ENCODE measurements at regions of chr6 and their contacts with region 1.

Region 1: DNA sequence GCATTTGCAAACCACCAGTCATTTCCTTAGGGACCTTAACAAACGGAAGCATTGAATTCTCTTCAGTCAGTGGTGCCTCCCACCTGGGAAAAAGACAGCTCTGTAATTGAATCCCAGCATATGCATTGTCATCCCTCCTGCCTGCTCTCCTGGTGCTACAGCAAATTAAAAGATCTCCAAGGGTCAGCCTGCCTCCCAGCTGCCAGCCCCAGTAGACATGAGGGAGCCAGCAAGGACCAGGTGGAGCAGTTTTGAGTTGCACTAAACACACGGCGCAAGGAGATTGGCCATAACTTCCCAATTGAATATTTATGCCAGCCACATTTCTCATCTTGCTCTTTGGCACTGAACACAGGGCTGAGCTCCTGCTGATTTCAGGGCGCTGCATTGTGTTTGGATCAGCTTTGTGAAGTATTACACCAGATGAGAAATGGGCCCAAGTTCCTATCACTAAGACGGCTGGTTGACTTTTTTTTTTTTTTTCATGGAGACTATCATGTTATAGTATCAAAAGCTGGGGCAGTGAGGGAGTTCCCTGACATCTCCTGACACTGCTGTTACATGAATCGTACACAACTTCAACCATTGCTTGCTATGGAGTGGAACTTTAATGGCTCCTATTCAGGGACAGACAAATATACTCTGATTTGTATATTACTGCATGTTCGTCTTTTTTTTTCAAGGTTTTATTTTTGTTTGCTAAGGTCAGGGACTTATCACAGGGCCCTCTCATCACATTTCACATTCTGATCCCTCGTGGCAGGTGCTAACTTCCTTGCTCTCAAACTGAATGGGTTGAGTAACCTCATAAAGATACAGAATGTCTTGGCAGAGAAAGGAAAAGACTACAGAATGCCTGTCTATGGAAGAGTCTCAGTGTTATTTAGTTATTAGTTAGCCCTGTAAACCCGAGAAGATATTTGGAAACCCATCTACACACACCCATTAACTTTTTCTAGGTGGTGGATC is 191.1 kb downstream of the EYA4 start:
- DNase-seq: peak; percentile 66
- H3K4me3 ChIP-seq: no peak overlapping the region
- H3K27ac ChIP-seq: peak overlapping the region; percentile 31
- H3K4me1 ChIP-seq: peaks cover 17% of the 10 kb centered on the region
- H3K27me3 ChIP-seq: no peaks in the 10 kb centered on the region
- CTCF ChIP-seq: no peak

Region 2: GRCh38 chr6:133406226-133406625 is 26.1 kb before region 1 on chr6:
- CTCF ChIA-PET with region 1: interaction called, 13 read pairs
- POLR2A ChIA-PET with region 1: no interaction called
- intact Hi-C with region 1: no loop called
- DNase-seq: no peak
- H3K4me3 ChIP-seq: no peak overlapping the region
- H3K27ac ChIP-seq: no peak overlapping the region
- H3K4me1 ChIP-seq: peaks cover 36% of the 10 kb centered on the region
- H3K27me3 ChIP-seq: no peaks in the 10 kb centered on the region
- CTCF ChIP-seq: no peak

Region 3: DNA sequence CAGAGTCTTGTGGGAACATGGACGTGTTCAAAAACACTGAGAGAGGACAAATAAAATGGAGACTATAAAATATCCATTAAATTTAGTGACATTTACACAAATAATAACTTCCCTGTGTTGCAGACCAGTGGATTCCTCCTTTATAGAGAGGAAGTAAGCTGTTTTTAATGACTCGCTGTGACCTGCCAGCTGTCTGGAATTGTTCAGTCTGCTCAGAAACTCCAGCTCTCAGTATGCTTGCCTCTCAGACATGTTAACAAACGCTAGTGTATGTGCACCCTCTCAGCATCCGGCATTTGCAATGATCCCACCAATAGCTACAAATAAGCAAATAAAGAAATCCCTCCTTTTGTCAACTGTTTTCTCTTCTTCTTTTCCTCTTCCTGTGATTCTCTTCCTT is 298.6 kb after region 1 on chr6:
- CTCF ChIA-PET with region 1: no interaction called
- POLR2A ChIA-PET with region 1: no interaction called
- intact Hi-C with region 1: no loop called
- DNase-seq: no peak
- H3K4me3 ChIP-seq: no peak overlapping the region
- H3K27ac ChIP-seq: no peak overlapping the region
- H3K4me1 ChIP-seq: no peaks in the 10 kb centered on the region
- H3K27me3 ChIP-seq: peaks cover 53% of the 10 kb centered on the region
- CTCF ChIP-seq: no peak

Region 4: DNA sequence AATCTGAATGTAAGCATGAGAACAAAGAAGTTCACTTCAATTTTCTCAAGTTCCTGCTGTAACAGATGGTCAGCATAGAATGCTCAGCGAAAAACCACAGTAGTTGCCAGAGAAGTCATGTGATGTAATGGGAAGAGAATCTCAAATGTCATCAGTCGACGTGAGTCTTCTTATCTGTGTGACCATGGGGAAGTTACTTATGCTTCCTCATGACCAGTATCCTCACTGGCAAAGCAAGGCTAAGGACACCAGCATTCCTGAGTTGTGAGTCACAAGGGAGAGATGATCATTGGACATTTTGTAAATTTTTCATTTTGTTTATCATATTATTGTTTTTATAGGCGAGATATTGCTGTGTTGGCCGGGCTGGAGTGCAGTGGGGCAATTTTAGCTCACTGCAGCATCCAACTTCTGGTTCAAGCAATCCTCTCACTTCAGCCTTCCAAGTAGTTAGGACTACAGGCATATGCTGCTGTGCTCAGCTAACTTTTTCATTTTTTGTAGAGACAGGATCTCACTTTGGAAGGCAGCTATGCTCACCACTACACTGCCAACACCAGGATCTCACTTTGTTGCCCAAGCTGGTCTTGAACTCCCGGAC is 863.7 kb after region 1 on chr6:
- CTCF ChIA-PET with region 1: no interaction called
- POLR2A ChIA-PET with region 1: no interaction called
- intact Hi-C with region 1: no loop called
- DNase-seq: peak; percentile 33
- H3K4me3 ChIP-seq: no peak overlapping the region
- H3K27ac ChIP-seq: no peak overlapping the region
- H3K4me1 ChIP-seq: peaks cover 8% of the 10 kb centered on the region
- H3K27me3 ChIP-seq: no peaks in the 10 kb centered on the region
- CTCF ChIP-seq: no peak

Measured in A673 (cell line).